B cell (primary cell): ENCODE measurements at regions of chr12 and their contacts with region 1.

Region 1: GRCh38 chr12:22173177-22173576 is 127.2 kb downstream of the CMAS start:
- DNase-seq: peak; percentile 18
- ATAC-seq: no peak
- H3K4me3 ChIP-seq: no peak overlapping the region
- H3K4me3 Mint-ChIP-seq: no peak overlapping the region
- H3K27ac ChIP-seq: no peak overlapping the region
- H3K27ac Mint-ChIP-seq: no peak overlapping the region
- H3K4me1 ChIP-seq: no peaks in the 10 kb centered on the region
- H3K4me1 Mint-ChIP-seq: peaks cover 5% of the 10 kb centered on the region
- H3K27me3 ChIP-seq: no peaks in the 10 kb centered on the region
- H3K27me3 Mint-ChIP-seq: peaks cover 23% of the 10 kb centered on the region
- CTCF ChIP-seq: peak; percentile 8

Region 2: GRCh38 chr12:22083167-22083566 is 90.0 kb before region 1 on chr12:
- CTCF ChIA-PET with region 1: interaction called, 9 read pairs
- POLR2A ChIA-PET with region 1: no interaction called
- intact Hi-C with region 1: loop called (anchors 5 kb)
- DNase-seq: peak; percentile 56
- ATAC-seq: no peak
- H3K4me3 ChIP-seq: no peak overlapping the region
- H3K4me3 Mint-ChIP-seq: no peak overlapping the region
- H3K27ac ChIP-seq: no peak overlapping the region
- H3K27ac Mint-ChIP-seq: no peak overlapping the region
- H3K4me1 ChIP-seq: no peaks in the 10 kb centered on the region
- H3K4me1 Mint-ChIP-seq: no peaks in the 10 kb centered on the region
- H3K27me3 ChIP-seq: no peaks in the 10 kb centered on the region
- H3K27me3 Mint-ChIP-seq: peaks cover 2% of the 10 kb centered on the region
- CTCF ChIP-seq: peak; percentile 70

Region 3: GRCh38 chr12:22100958-22101748 is 72.0 kb before region 1 on chr12:
- CTCF ChIA-PET with region 1: interaction called, 20 read pairs
- POLR2A ChIA-PET with region 1: no interaction called
- intact Hi-C with region 1: loop called (anchors 1 kb)
- DNase-seq: peak; percentile 63
- ATAC-seq: peak; percentile 53
- H3K4me3 ChIP-seq: no peak overlapping the region
- H3K4me3 Mint-ChIP-seq: no peak overlapping the region
- H3K27ac ChIP-seq: no peak overlapping the region
- H3K27ac Mint-ChIP-seq: no peak overlapping the region
- H3K4me1 ChIP-seq: peaks cover 8 to 13% of the 10 kb centered on the region in 2 donors
- H3K4me1 Mint-ChIP-seq: peaks cover 10% of the 10 kb centered on the region
- H3K27me3 ChIP-seq: no peaks in the 10 kb centered on the region
- H3K27me3 Mint-ChIP-seq: peaks cover 21% of the 10 kb centered on the region
- CTCF ChIP-seq: peak; percentile 45

Region 4: DNA sequence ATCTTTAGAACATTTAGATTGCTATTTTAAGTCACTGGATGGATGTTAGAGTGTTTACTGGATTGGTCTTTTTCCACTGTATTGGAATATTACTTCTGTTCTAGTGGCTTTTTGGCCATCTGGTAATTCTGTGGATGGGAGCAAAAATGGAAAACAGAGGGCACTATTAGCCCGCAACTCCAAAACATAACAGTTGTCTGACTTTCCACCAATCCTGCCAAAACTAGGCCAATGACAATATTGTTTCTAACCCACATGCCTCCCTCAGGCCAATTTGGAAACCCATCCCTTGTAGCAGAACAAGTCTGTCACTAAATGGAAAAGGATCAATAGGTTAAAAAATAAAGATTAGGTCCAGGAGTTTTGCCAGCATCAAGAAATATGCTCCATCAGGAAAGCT is 549.6 kb after region 1 on chr12:
- CTCF ChIA-PET with region 1: no interaction called
- POLR2A ChIA-PET with region 1: no interaction called
- intact Hi-C with region 1: no loop called
- DNase-seq: no peak
- ATAC-seq: no peak
- H3K4me3 ChIP-seq: no peak overlapping the region
- H3K4me3 Mint-ChIP-seq: no peak overlapping the region
- H3K27ac ChIP-seq: no peak overlapping the region
- H3K27ac Mint-ChIP-seq: no peak overlapping the region
- H3K4me1 ChIP-seq: no peaks in the 10 kb centered on the region
- H3K4me1 Mint-ChIP-seq: no peaks in the 10 kb centered on the region
- H3K27me3 ChIP-seq: no peaks in the 10 kb centered on the region
- H3K27me3 Mint-ChIP-seq: peaks cover 15% of the 10 kb centered on the region
- CTCF ChIP-seq: no peak